ENCODE measurements at regions of chr5 and their contacts with region 1.

Region 1: GRCh38 chr5:132238169-132238744 is 10.6 kb upstream of the P4HA2 start:
- DNase-seq: no peak
- H3K4me3 ChIP-seq: no peak overlapping the region
- H3K27me3 ChIP-seq: no peaks in the 10 kb centered on the region
- CTCF ChIP-seq: peak; percentile 90

Region 2: GRCh38 chr5:132180134-132180745 is 58.0 kb before region 1 on chr5:
- CTCF ChIA-PET with region 1: interaction called, 13 read pairs
- POLR2A ChIA-PET with region 1: no interaction called
- DNase-seq: peak; percentile 19
- H3K4me3 ChIP-seq: no peak overlapping the region
- H3K27me3 ChIP-seq: no peaks in the 10 kb centered on the region
- CTCF ChIP-seq: peak; percentile 83

Region 3: DNA sequence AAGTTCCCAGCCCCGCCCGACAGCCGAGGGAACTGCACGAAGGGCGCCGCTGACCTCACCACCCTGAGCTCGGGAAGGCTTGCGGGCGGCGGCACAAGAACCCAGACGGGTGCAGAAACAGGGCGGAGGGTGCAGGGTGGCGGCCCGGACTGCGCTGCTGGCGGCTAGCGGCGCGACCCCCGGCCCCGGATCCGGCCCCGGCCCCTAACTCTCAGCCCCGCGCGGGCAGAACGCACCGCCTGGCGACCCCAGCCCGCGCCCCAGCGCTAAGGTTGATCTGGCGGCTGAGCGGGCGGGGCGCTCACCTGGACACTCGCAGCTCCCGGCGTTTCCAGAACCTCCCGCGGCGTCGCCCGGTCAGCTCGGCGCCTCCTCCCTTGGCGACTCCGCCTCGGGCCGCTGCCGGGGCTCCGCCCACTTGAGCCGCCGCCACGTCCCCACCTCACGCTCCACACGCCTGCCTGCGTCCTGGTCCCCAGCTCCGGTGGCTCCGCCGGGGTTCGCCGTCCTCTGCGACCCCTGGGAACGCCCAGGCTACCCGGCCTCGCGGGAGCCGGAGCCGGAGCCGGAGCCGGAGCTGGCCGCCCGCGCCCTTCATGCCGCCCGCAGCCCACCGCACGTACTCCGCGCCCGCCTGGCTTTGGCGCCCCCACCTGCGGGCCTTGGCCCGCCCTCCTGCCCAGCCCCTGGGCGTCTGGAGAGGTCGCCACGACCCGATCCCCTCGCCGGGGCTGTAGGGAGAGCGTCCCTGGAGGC is 10.6 kb before region 1 on chr5 and contains the start of gene P4HA2:
- CTCF ChIA-PET with region 1: interaction called, 46 read pairs
- POLR2A ChIA-PET with region 1: no interaction called
- DNase-seq: no peak
- H3K4me3 ChIP-seq: peak within 1 kb of the TSS; percentile 61
- H3K27me3 ChIP-seq: peaks cover 1% of the 10 kb centered on the region; the same call in 1 of the 2 replicates
- CTCF ChIP-seq: peak; percentile 9; the same call in 1 of the 2 replicates
- polyA plus RNA-seq, gene P4HA2: 372 and 435 TPM in 2 replicates

Region 4: GRCh38 chr5:132272311-132273210 is 34.3 kb after region 1 on chr5:
- CTCF ChIA-PET with region 1: interaction called, 20 read pairs
- POLR2A ChIA-PET with region 1: no interaction called
- DNase-seq: no peak
- H3K4me3 ChIP-seq: no peak overlapping the region
- H3K27me3 ChIP-seq: no peaks in the 10 kb centered on the region
- CTCF ChIP-seq: peak; percentile 85

Region 5: DNA sequence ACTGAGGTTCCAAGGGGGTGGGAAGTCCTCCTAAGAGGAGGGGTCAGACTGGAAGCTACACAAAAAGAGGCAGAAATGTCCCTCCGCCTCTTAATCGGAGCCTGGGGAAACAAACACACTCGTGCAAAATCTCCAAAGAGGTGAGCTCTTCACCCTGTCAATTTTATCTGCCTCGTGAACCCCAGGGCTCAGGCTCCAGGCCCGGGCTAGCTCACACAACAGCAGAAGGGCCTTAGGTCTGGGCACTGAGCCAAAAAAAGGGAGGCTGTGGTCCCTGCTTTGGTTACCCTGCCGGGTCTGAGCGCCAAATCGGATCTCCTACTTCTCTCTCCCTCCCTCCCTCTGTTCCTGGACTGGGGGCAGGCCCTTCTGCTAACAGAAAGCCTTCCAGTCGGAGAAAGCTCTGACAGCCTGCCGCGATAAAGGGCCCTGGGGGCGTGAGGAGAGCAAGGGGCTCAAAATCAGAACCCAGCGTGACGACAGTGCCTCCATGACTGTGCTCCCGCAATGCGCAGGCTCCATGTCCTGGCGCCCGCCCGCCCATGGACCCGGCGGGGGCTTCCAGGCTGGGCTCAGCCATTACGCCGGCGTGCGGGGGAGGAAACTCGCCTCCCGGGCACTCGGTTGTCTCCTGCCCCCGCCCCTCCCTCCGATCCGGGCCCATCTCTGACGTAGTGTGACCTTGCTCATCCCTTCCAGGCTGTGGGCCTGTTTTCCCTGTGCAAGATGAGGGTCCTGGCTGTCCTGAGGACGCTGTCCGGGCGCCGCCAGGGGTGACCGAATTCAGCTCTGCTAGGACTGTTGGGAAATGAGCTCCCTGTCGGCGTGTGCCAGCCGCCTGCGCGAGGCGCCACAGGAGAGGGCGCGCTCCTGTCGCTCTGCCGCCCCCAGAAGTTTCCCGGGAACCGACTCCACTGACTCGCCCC is 55.1 kb after region 1 on chr5:
- CTCF ChIA-PET with region 1: interaction called, 38 read pairs
- POLR2A ChIA-PET with region 1: no interaction called
- DNase-seq: peak; percentile 31
- H3K4me3 ChIP-seq: peak overlapping the region; percentile 62
- H3K27me3 ChIP-seq: no peaks in the 10 kb centered on the region
- CTCF ChIP-seq: peak; percentile 35; the same call in 1 of the 2 replicates

Region 6: GRCh38 chr5:132754947-132755346 is 516.7 kb after region 1 on chr5:
- CTCF ChIA-PET with region 1: no interaction called
- POLR2A ChIA-PET with region 1: no interaction called
- DNase-seq: no peak
- H3K4me3 ChIP-seq: no peak overlapping the region
- H3K27me3 ChIP-seq: no peaks in the 10 kb centered on the region
- CTCF ChIP-seq: peak; percentile 38; the same call in 1 of the 2 replicates

Region 7: DNA sequence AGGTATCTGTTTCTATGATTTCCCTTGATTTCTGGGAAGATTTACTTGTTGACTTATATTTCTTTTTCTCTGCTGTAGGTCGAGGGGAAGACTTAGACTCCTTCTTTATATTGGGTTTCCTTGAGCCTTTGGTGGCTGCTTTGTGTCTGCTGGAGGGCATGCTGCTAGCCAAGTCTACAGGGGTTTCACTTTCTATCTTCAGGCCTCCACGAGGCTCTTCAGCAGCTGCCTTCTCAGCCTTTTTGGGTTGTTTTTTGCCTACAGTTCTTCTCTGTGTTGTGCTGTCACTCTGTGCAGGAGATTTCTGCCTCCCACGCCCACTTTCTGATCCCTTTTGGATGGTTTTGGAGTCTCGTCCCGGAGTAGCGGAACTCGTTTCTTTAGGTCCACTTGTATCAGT is 658.4 kb after region 1 on chr5:
- CTCF ChIA-PET with region 1: no interaction called
- POLR2A ChIA-PET with region 1: no interaction called
- DNase-seq: no peak
- H3K4me3 ChIP-seq: no peak overlapping the region
- H3K27me3 ChIP-seq: no peaks in the 10 kb centered on the region
- CTCF ChIP-seq: no peak

Measured in BJ (cell line).